ENCODE measurements at regions of chr4 and their contacts with region 1.

Region 1: GRCh38 chr4:54228056-54228527 is 1.0 kb upstream of the PDGFRA start:
- DNase-seq: peak; percentile 81
- ATAC-seq: peak; percentile 74
- H3K4me3 Mint-ChIP-seq: peak overlapping the region; percentile 28
- H3K27ac Mint-ChIP-seq: no peak overlapping the region
- H3K4me1 Mint-ChIP-seq: peaks cover 41% of the 10 kb centered on the region
- H3K27me3 Mint-ChIP-seq: peaks cover 74% of the 10 kb centered on the region

Region 2: DNA sequence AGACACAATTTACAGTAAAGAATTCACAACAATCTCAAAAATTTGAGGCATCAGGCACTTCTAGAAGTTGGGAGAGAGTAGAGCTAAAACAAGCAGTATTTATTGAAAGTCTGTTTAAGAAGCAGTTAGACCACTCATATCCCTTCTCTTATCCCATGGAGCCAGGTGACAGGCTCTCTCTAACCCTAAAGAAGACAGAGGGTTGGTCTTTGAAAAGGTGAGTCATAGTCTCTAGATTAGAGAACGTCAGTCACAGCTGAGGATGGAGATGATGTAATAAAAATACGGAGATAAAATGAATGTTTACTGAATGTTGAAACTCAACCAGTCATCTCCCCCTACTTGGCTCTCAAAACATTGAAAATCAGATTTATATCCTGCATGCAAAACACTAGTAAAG is 387.4 kb before region 1 on chr4:
- CTCF ChIA-PET with region 1: no interaction called
- POLR2A ChIA-PET with region 1: no interaction called
- intact Hi-C with region 1: no loop called
- DNase-seq: no peak
- ATAC-seq: peak; percentile 26
- H3K4me3 Mint-ChIP-seq: no peak overlapping the region
- H3K27ac Mint-ChIP-seq: no peak overlapping the region
- H3K4me1 Mint-ChIP-seq: no peaks in the 10 kb centered on the region
- H3K27me3 Mint-ChIP-seq: peaks cover 4% of the 10 kb centered on the region

Region 3: GRCh38 chr4:53855581-53856250 is 372.4 kb before region 1 on chr4:
- CTCF ChIA-PET with region 1: no interaction called
- POLR2A ChIA-PET with region 1: no interaction called
- intact Hi-C with region 1: no loop called
- DNase-seq: no peak
- ATAC-seq: no peak
- H3K4me3 Mint-ChIP-seq: no peak overlapping the region
- H3K27ac Mint-ChIP-seq: no peak overlapping the region
- H3K4me1 Mint-ChIP-seq: no peaks in the 10 kb centered on the region
- H3K27me3 Mint-ChIP-seq: peaks cover 6% of the 10 kb centered on the region

Region 4: DNA sequence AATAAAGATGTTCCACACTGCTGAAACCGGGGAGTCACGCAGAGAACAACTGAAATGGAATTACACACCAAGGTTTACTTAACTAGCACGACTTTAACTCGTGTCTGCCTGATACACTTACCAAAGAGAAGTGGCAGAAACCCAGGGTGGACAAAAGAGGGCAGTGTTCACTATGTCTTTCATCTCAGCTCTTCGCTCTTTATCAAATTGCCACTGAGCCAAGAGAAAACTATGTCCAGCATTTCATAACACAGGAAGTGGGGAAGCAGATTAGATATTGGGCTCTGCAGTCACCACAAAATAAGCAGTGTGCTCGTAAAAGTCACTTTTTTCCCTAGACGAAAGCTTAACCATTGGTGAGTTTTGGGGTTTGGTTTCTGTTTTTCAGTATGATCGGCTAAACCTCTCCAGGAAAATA is 319.4 kb before region 1 on chr4:
- CTCF ChIA-PET with region 1: interaction called, 58 read pairs
- POLR2A ChIA-PET with region 1: no interaction called
- intact Hi-C with region 1: loop called (anchors 1 kb)
- DNase-seq: no peak
- ATAC-seq: peak; percentile 60
- H3K4me3 Mint-ChIP-seq: no peak overlapping the region
- H3K27ac Mint-ChIP-seq: no peak overlapping the region
- H3K4me1 Mint-ChIP-seq: peaks cover 13% of the 10 kb centered on the region
- H3K27me3 Mint-ChIP-seq: peaks cover 45% of the 10 kb centered on the region

Region 5: GRCh38 chr4:54100595-54101189 is 127.4 kb before region 1 on chr4:
- CTCF ChIA-PET with region 1: interaction called, 3 read pairs
- POLR2A ChIA-PET with region 1: no interaction called
- intact Hi-C with region 1: loop called (anchors 1 kb)
- DNase-seq: peak; percentile 34
- ATAC-seq: peak; percentile 33
- H3K4me3 Mint-ChIP-seq: peak overlapping the region; percentile 32
- H3K27ac Mint-ChIP-seq: no peak overlapping the region
- H3K4me1 Mint-ChIP-seq: peaks cover 50% of the 10 kb centered on the region
- H3K27me3 Mint-ChIP-seq: peaks cover 82% of the 10 kb centered on the region

Region 6: DNA sequence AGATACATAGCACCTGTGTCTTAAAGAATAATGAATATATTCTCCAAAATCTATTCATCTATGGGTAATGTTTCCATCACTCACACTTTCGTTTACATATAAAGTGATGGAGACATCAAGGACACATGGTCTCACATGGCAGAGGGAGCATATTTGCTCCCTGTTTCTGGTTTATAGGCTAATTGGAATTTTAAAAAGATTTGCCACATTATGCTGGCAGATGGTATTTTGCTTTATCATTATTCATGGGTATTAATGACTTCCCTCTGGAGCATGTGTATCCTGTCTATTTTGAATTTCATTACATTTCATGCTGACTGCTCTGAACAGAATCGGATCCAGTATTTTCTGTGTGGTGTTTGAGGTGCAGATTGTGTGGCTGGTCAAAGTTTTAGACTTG is 80.0 kb after region 1 on chr4:
- CTCF ChIA-PET with region 1: no interaction called
- POLR2A ChIA-PET with region 1: no interaction called
- intact Hi-C with region 1: no loop called
- DNase-seq: no peak
- ATAC-seq: no peak
- H3K4me3 Mint-ChIP-seq: no peak overlapping the region
- H3K27ac Mint-ChIP-seq: no peak overlapping the region
- H3K4me1 Mint-ChIP-seq: no peaks in the 10 kb centered on the region
- H3K27me3 Mint-ChIP-seq: peaks cover 9% of the 10 kb centered on the region